Testis (tissue), 5 donors: ENCODE measurements at regions of chr1 and their contacts with region 1.

Region 1: DNA sequence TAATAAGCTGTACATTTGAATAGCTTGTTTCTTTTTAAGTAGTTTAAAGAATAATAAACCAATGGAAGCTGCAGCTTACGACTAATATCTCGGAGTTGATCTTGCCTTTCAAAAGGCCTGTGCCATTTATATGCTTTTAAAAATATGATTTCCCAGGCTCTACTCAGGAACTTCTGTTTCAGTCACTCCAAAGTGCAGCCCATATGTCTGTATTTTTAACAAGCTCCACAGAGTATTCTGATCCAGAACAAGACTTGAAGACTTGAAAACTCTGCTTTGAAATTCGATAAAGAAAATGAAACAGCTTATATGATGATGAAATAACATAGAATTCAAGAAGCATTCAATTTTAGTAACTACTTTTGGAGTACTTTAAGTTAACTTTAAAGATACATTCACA is 79.1 kb upstream of the PLPPR4 start:
- DNase-seq: no peak
- H3K4me3 ChIP-seq: no peak overlapping the region
- H3K27ac ChIP-seq: no peak overlapping the region
- H3K4me1 ChIP-seq: no peaks in the 10 kb centered on the region
- H3K27me3 ChIP-seq: no peaks in the 10 kb centered on the region
- CTCF ChIP-seq: no peak
- POLR2A ChIP-seq: no peak

Region 2: GRCh38 chr1:99051611-99052283 is 133.4 kb before region 1 on chr1:
- intact Hi-C with region 1: no loop called
- DNase-seq: no peak
- H3K4me3 ChIP-seq: no peak overlapping the region
- H3K27ac ChIP-seq: no peak overlapping the region
- H3K4me1 ChIP-seq: no peaks in the 10 kb centered on the region
- H3K27me3 ChIP-seq: no peaks in the 10 kb centered on the region
- CTCF ChIP-seq: no peak
- POLR2A ChIP-seq: no peak

Region 3: DNA sequence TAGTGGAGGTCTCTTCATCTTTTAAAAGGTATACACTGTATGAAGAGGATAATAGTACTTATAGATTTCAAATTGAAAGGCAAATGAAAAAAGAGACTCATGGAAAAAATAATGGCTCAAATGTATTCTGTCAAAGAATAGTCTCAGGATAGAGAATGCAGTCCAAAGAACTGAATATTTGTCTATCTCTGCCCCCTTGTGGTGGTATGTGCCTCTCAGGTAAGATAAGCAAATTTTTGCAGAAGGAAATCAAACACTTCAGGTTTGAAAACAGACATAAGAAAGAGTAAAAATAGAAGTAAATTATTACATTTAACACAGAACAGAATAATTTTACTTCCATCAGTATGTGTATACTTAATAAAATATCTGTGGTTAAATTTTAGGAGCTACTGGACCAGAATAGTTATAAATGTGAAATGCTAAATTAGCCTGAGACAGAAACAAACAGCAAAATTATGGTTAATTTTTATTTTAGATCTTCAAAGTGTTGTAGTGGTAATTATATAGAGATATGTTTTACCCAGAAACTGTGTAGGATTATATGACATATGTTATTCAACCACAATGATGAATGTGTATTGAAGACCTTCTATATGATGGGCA is 296.3 kb after region 1 on chr1:
- intact Hi-C with region 1: loop called (anchors 5 kb)
- DNase-seq: peak; percentile 80
- H3K4me3 ChIP-seq: no peak overlapping the region
- H3K27ac ChIP-seq: no peak overlapping the region
- H3K4me1 ChIP-seq: no peaks in the 10 kb centered on the region
- H3K27me3 ChIP-seq: no peaks in the 10 kb centered on the region
- CTCF ChIP-seq: peak; percentile 58 to 73 (median 61)
- POLR2A ChIP-seq: no peak